ENCODE measurements at regions of chr17 and their contacts with region 1.

Region 1: GRCh38 chr17:35969558-35970380 is 11.5 kb downstream of the CCL16 start:
- DNase-seq: peak; percentile 79
- H3K4me3 Mint-ChIP-seq: no peak overlapping the region
- H3K27ac Mint-ChIP-seq: no peak overlapping the region
- H3K4me1 Mint-ChIP-seq: peaks cover 7% of the 10 kb centered on the region
- H3K27me3 Mint-ChIP-seq: peaks cover 13% of the 10 kb centered on the region
- CTCF ChIP-seq: peak; percentile 87

Region 2: GRCh38 chr17:35947156-35947585 is 22.6 kb before region 1 on chr17:
- CTCF ChIA-PET with region 1: interaction called, 12 read pairs
- POLR2A ChIA-PET with region 1: no interaction called
- intact Hi-C with region 1: no loop called
- DNase-seq: peak; percentile 69
- H3K4me3 Mint-ChIP-seq: peak overlapping the region; percentile 33
- H3K27ac Mint-ChIP-seq: no peak overlapping the region
- H3K4me1 Mint-ChIP-seq: no peaks in the 10 kb centered on the region
- H3K27me3 Mint-ChIP-seq: peaks cover 15% of the 10 kb centered on the region
- CTCF ChIP-seq: peak; percentile 89

Region 3: DNA sequence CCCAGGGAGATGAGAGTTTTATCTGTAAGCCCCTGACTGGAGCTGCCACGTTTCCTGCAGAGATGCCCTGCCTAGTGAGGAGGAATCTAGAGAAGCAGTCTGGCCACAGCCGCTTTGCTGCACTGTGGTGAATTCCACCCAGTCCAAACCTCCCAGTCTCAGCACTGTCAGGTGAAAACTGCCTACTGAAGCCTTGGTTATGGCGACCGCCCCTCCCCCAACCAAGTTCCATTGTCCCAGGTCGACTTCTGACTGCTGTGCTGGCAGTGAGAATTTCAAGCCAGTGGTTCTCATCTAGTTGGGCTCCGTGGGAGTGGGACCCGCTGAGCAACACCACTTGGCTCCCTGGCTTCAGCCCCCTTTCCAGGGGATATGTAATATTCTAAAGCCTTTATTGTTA is 16.0 kb before region 1 on chr17:
- CTCF ChIA-PET with region 1: interaction called, 23 read pairs
- POLR2A ChIA-PET with region 1: no interaction called
- intact Hi-C with region 1: no loop called
- DNase-seq: no peak
- H3K4me3 Mint-ChIP-seq: no peak overlapping the region
- H3K27ac Mint-ChIP-seq: no peak overlapping the region
- H3K4me1 Mint-ChIP-seq: no peaks in the 10 kb centered on the region
- H3K27me3 Mint-ChIP-seq: peaks cover 59% of the 10 kb centered on the region
- CTCF ChIP-seq: no peak

Region 4: GRCh38 chr17:36117505-36118382 is 148.0 kb after region 1 on chr17:
- CTCF ChIA-PET with region 1: interaction called, 10 read pairs
- POLR2A ChIA-PET with region 1: no interaction called
- intact Hi-C with region 1: no loop called
- DNase-seq: no peak
- H3K4me3 Mint-ChIP-seq: no peak overlapping the region
- H3K27ac Mint-ChIP-seq: no peak overlapping the region
- H3K4me1 Mint-ChIP-seq: peaks cover 6% of the 10 kb centered on the region
- H3K27me3 Mint-ChIP-seq: peaks cover 44% of the 10 kb centered on the region
- CTCF ChIP-seq: no peak

Region 5: DNA sequence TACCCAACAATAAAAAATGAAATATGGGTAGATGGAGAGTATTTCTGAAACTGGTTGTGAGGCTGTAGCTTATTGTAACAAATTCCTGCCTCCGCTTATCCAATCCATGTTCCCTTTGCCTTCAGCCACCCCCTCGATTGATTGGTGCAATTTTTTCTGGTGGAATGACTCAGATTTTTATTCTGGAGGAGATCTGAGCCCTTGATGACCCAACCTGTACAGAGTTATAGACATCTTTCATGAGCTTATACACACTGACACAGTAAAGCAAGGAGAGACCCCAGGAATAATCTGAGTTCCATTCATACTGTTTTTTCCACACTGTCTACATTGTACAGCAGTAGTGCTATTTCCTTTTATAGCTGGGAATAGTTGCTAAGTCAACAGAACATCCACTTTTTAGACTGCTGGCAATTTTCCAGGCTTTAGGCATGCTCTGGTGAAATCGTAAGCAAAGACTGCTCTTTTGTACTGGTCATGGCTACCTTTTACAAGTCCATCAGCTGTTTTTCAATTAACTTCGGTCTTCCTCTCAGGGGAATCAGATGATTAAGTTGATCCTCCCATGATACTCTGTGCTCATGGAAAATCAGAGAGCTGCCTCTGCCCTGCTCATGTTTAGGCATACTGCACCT is 163.9 kb after region 1 on chr17:
- CTCF ChIA-PET with region 1: interaction called, 11 read pairs
- POLR2A ChIA-PET with region 1: no interaction called
- intact Hi-C with region 1: no loop called
- DNase-seq: peak; percentile 44
- H3K4me3 Mint-ChIP-seq: no peak overlapping the region
- H3K27ac Mint-ChIP-seq: no peak overlapping the region
- H3K4me1 Mint-ChIP-seq: no peaks in the 10 kb centered on the region
- H3K27me3 Mint-ChIP-seq: peaks cover 85% of the 10 kb centered on the region
- CTCF ChIP-seq: no peak

Region 6: GRCh38 chr17:36486204-36487194 is 516.7 kb after region 1 on chr17 and contains the start of gene ZNHIT3:
- CTCF ChIA-PET with region 1: interaction called, 22 read pairs
- POLR2A ChIA-PET with region 1: interaction called, 4 read pairs
- intact Hi-C with region 1: no loop called
- DNase-seq: peak; percentile 94
- H3K4me3 Mint-ChIP-seq: peak within 1 kb of the TSS; percentile 86
- H3K27ac Mint-ChIP-seq: peak within 1 kb of the TSS; percentile 92
- H3K4me1 Mint-ChIP-seq: peaks cover 6% of the 10 kb centered on the region
- H3K27me3 Mint-ChIP-seq: peaks cover 10% of the 10 kb centered on the region
- CTCF ChIP-seq: no peak
- total RNA-seq, gene ZNHIT3: 33.9 and 35.5 TPM in 2 replicates